ENCODE measurements at regions of chr1 and their contacts with region 1.

Region 1: DNA sequence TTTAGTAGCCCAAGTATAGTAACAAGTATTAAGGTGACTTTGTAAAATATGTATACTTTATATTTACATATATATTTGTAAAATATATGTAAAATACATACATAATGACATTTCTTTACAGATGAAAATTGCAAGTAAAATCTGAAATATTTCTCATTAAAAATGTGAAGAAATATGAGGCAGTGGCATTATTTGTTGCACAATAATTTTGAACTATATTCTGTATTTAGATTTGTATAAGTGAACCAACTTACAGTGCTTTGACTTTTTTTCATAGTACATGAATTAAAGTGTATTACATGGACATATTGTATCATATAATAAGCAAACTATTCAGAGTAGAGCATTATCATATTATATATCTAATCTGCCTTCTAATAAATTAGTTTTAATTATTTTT is 60.3 kb downstream of the ANGPTL1 start:
- DNase-seq: no peak
- ATAC-seq: no peak
- H3K4me3 ChIP-seq: no peak overlapping the region
- H3K27ac ChIP-seq: no peak overlapping the region
- H3K4me1 ChIP-seq: no peaks in the 10 kb centered on the region
- H3K27me3 ChIP-seq: no peaks in the 10 kb centered on the region
- CTCF ChIP-seq: no peak
- POLR2A ChIP-seq: no peak
- RAD21 ChIP-seq: no peak

Region 2: DNA sequence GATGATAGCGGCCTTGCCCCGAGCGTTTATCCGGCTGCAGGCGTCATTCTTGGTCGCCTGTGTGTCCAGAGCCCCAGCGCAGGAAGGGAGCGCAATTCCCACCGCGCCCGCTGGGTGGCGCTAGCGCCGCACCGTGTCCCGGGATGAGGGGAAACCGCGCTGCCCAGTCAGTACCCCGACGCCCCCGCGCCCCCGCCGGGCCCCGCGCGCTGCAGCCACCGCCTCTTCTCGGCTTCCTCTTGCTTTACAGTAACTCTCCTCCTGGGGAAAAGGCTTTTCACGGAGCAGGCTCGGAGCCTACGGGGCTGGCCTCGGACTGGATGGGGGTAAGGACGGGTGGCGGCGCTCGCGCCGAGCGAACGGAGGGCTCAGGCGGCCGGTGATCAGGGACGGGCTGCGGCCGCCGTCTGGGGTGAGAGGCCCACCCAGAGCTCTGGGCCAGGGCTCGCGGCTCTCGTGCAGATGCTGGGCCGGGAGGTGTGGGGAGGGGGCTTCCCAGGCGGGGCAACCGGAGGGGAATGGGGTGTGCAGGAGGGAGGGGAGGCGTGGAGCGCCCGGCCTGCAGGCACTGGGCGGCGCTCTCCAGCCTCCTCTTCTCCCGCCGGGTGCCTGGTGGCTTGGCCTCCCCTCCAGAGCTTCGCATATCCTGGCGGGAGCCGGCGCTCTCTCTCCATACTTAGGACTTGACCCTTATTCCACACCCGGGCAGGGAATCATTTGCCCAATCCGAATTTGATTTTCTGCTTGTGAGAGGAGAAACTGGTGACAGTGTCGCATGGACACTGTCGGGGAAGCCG is 267.8 kb before region 1 on chr1:
- CTCF ChIA-PET with region 1: no interaction called
- POLR2A ChIA-PET with region 1: no interaction called
- dilution Hi-C with region 1: no loop called
- in situ Hi-C with region 1: no loop called
- intact Hi-C with region 1: no loop called
- DNase-seq: peak; percentile 89
- ATAC-seq: peak; percentile 77
- H3K4me3 ChIP-seq: peak overlapping the region; percentile 64
- H3K27ac ChIP-seq: peak overlapping the region; percentile 93
- H3K4me1 ChIP-seq: peaks cover 40% of the 10 kb centered on the region
- H3K27me3 ChIP-seq: no peaks in the 10 kb centered on the region
- CTCF ChIP-seq: peak; percentile 88
- POLR2A ChIP-seq: peak; percentile 21; the same call in 1 of the 2 replicates
- RAD21 ChIP-seq: peak; percentile 82

Region 3: DNA sequence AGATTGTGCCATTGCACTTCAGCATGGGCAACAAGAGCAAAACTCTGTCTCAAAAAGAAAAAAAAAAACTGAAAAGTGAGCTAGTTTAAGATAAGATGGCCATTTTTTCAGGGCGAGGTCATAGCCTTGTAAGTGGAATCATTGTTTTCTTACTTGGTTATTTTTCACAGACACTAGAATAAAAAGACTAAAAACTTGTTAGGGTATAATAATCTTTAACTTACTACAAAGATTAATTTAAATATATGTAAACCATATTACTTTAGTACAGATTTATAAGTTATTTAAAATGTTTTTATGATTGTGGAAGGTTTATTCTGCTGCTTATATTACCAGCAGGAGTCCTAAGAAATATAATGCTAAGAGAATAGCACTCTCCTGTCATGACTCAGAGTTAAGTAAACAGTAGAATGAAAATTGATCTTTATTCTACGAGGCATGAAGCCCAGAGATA is 36.8 kb after region 1 on chr1:
- CTCF ChIA-PET with region 1: no interaction called
- POLR2A ChIA-PET with region 1: no interaction called
- dilution Hi-C with region 1: no loop called
- in situ Hi-C with region 1: no loop called
- intact Hi-C with region 1: loop called (anchors 5 kb)
- DNase-seq: peak; percentile 86
- ATAC-seq: peak; percentile 82
- H3K4me3 ChIP-seq: no peak overlapping the region
- H3K27ac ChIP-seq: no peak overlapping the region
- H3K4me1 ChIP-seq: peaks cover 3% of the 10 kb centered on the region; the same call in 1 of the 2 replicates
- H3K27me3 ChIP-seq: no peaks in the 10 kb centered on the region
- CTCF ChIP-seq: no peak; the same call in 1 of the 2 replicates
- POLR2A ChIP-seq: no peak
- RAD21 ChIP-seq: no peak

Region 4: DNA sequence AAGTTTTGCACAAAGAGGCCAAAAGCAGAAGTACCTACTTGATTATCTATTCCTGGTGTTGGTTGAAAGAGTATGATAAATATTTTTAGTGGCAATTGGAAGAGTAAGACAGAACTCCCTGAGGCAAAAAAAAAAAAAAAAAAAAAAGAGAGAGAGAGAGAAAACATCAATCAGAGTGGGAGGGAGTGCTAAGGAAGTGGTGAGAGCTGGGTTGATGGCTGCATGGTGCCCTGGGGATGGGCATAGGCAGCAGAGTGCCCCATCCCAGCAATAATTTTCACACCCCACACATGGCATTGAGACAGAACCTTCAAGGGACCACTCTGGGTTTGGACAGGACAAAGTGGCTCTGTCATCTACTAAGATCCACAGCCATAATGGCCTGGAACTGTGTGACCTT is 155.7 kb after region 1 on chr1:
- CTCF ChIA-PET with region 1: no interaction called
- POLR2A ChIA-PET with region 1: no interaction called
- dilution Hi-C with region 1: no loop called
- in situ Hi-C with region 1: no loop called
- intact Hi-C with region 1: no loop called
- DNase-seq: no peak
- ATAC-seq: no peak
- H3K4me3 ChIP-seq: no peak overlapping the region
- H3K27ac ChIP-seq: no peak overlapping the region
- H3K4me1 ChIP-seq: no peaks in the 10 kb centered on the region
- H3K27me3 ChIP-seq: peaks cover 13% of the 10 kb centered on the region
- CTCF ChIP-seq: no peak
- POLR2A ChIP-seq: no peak
- RAD21 ChIP-seq: no peak

Measured in IMR-90 (cell line).